PC-3 (cell line): ENCODE measurements at regions of chrX and their contacts with region 1.

Region 1: DNA sequence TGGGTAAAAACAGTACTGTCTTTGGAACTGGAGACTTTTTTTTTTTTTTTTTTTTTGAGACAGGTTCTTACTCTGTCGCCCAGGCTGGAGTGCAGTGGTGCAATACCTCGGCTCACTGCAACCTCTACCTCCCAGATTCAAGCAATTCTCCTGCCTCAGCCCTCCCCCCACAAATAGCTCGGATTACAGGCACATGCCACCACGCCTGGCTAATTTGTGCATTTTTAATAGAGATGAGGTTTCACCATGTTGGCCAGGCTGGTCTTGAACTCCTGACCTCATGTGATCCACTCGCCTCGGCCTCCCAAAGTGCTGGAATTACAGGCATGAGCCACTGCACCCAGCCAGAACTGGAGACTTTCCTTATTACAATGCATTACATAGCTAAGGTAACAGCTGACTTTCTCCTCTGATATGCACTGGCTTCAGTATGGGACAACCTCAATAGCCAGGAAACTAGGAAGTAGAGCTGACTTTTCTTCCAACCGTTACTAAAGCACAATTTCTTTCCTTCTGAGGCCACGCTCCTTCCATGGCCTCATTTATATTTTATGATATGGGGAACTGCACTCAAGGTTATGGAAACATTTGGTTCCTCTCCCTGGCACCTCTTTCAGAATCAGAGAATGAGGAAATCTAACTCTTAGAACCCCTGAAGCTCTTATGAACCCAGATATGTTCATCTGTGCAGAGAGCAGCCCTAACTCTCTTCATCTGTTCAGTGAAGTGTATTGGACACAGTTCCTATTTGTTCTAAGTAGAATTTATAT is 53.5 kb upstream of the FAM9B start:
- DNase-seq: no peak
- ATAC-seq: no peak
- H3K4me3 ChIP-seq: no peak overlapping the region
- H3K27ac ChIP-seq: no peak overlapping the region
- H3K4me1 ChIP-seq: no peaks in the 10 kb centered on the region
- H3K27me3 ChIP-seq: no peaks in the 10 kb centered on the region
- CTCF ChIP-seq: no peak

Region 2: GRCh38 chrX:9071031-9071650 is 16.3 kb before region 1 on chrX:
- CTCF ChIA-PET with region 1: no interaction called
- POLR2A ChIA-PET with region 1: interaction called, 12 read pairs
- intact Hi-C with region 1: no loop called
- DNase-seq: peak; percentile 82
- ATAC-seq: peak; percentile 90
- H3K4me3 ChIP-seq: no peak overlapping the region
- H3K27ac ChIP-seq: peak overlapping the region; percentile 91
- H3K4me1 ChIP-seq: peaks cover 16% of the 10 kb centered on the region
- H3K27me3 ChIP-seq: no peaks in the 10 kb centered on the region
- CTCF ChIP-seq: no peak

Region 3: DNA sequence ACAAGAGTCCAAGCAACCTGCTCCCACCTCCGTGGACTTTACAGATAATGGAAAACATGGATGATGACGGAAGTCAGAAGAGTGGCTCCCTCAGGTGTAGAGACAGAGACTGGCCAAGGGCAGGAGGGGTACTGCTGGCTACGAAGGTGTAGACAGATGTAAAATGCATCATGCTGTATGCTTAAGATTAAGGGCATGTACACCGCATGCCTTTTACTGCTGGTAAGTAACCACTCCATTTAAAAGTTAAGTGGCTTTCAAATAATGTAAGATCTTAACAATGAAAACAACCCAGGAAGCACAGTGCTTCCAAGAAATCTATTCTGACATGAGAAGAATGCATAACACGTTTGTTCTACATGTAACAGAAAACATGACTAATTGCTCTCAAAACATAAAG is 23.4 kb after region 1 on chrX:
- CTCF ChIA-PET with region 1: no interaction called
- POLR2A ChIA-PET with region 1: no interaction called
- intact Hi-C with region 1: no loop called
- DNase-seq: no peak
- ATAC-seq: no peak
- H3K4me3 ChIP-seq: no peak overlapping the region
- H3K27ac ChIP-seq: no peak overlapping the region
- H3K4me1 ChIP-seq: peaks cover 11% of the 10 kb centered on the region; the same call in 1 of the 2 replicates
- H3K27me3 ChIP-seq: no peaks in the 10 kb centered on the region
- CTCF ChIP-seq: no peak

Region 4: GRCh38 chrX:9337051-9337450 is 249.6 kb after region 1 on chrX:
- CTCF ChIA-PET with region 1: no interaction called
- POLR2A ChIA-PET with region 1: no interaction called
- intact Hi-C with region 1: no loop called
- DNase-seq: no peak
- ATAC-seq: no peak
- H3K4me3 ChIP-seq: no peak overlapping the region
- H3K27ac ChIP-seq: no peak overlapping the region
- H3K4me1 ChIP-seq: peaks cover 22% of the 10 kb centered on the region
- H3K27me3 ChIP-seq: no peaks in the 10 kb centered on the region
- CTCF ChIP-seq: no peak